PC-9 (cell line): ENCODE measurements at regions of chr3 and their contacts with region 1.

Region 1: GRCh38 chr3:115436767-115437301 is 186.5 kb upstream of the GAP43 start:
- DNase-seq: peak; percentile 48 to 52
- H3K4me3 ChIP-seq: no peak overlapping the region
- H3K27ac ChIP-seq: no peak overlapping the region
- H3K4me1 ChIP-seq: peaks cover 7% of the 10 kb centered on the region; the same call in 1 of the 2 replicates
- H3K27me3 ChIP-seq: no peaks in the 10 kb centered on the region
- CTCF ChIP-seq: peak; percentile 35; the same call in 1 of the 2 replicates

Region 2: GRCh38 chr3:114770874-114771273 is 666.0 kb before region 1 on chr3:
- CTCF ChIA-PET with region 1: no interaction called
- POLR2A ChIA-PET with region 1: no interaction called
- intact Hi-C with region 1: no loop called
- DNase-seq: no peak
- H3K4me3 ChIP-seq: no peak overlapping the region
- H3K27ac ChIP-seq: no peak overlapping the region
- H3K4me1 ChIP-seq: no peaks in the 10 kb centered on the region
- H3K27me3 ChIP-seq: no peaks in the 10 kb centered on the region
- CTCF ChIP-seq: no peak

Region 3: DNA sequence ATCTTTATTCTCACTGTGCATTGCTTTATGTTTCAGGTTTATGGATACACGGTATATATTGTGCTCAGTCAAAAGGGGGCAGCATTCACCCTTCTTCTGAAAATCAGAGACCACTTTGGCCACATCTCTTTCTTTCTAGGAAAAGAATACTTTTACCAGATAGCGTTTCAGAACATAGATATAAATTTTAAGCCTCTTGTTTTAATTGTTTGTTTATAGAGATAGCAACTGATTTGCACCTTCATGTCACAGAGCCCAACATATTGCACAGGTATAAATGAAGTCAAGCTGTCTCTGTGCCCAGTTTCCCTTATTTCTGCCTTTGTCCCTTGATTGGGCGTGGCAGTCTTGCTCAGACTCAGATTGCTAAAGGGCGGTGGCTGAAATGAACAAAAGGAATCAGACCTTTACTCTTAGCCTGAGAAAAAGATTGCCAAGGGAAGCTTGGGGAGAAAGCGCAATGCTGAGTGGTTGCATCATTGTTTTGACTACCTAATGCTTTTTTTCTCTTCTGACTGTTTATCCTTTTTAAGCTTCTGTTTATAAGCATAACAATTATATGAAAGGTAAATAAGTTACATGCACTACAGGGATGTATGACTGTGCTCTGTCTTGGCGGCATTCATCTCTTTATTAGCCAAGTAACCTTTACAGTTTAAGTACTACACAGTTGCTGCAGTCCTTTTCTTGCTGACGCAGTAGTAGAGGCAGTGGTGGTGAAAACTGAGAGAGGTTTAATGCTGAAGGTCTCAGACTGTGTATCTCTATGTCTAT is 219.0 kb before region 1 on chr3:
- CTCF ChIA-PET with region 1: no interaction called
- POLR2A ChIA-PET with region 1: no interaction called
- intact Hi-C with region 1: loop called (anchors 2 kb)
- DNase-seq: peak; percentile 40 to 51
- H3K4me3 ChIP-seq: no peak overlapping the region
- H3K27ac ChIP-seq: no peak overlapping the region
- H3K4me1 ChIP-seq: peaks cover 7% of the 10 kb centered on the region
- H3K27me3 ChIP-seq: no peaks in the 10 kb centered on the region
- CTCF ChIP-seq: peak; percentile 84

Region 4: DNA sequence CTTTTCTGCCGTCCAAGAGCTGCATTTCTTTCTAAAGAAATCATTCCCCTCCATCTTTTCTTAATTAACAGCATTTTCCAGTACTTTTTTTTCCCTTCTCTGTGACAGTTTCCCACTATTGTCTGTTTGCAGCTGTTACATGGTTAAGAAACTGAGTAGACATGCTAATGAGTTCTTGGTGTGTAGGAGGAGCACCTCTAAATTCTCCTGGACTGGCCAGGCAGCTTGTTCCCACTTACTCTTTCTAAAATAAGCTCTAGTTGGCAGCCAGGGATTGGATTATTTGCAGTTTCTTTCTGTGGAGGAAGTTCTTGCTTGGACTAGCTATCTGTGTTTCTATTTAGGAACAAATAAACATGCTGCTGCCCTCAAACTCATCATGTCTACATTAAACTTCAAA is 48.7 kb before region 1 on chr3:
- CTCF ChIA-PET with region 1: no interaction called
- POLR2A ChIA-PET with region 1: no interaction called
- intact Hi-C with region 1: no loop called
- DNase-seq: no peak
- H3K4me3 ChIP-seq: no peak overlapping the region
- H3K27ac ChIP-seq: no peak overlapping the region
- H3K4me1 ChIP-seq: no peaks in the 10 kb centered on the region
- H3K27me3 ChIP-seq: no peaks in the 10 kb centered on the region
- CTCF ChIP-seq: no peak